H1 (cell line): ENCODE measurements at regions of chr14 and their contacts with region 1.

Region 1: GRCh38 chr14:100383727-100384158 is 60.6 kb downstream of the SLC25A47 start:
- DNase-seq: peak in 1 of 2 experiments; percentile 87
- H3K4me3 ChIP-seq: no peak overlapping the region
- H3K27ac ChIP-seq: no peak overlapping the region
- H3K4me1 ChIP-seq: peaks cover 0 to 9% (median 0%) of the 10 kb centered on the region in 4 experiments; a peak in 3 of 7 replicates
- H3K27me3 ChIP-seq: no peaks in the 10 kb centered on the region
- CTCF ChIP-seq: peak; percentile 93 to 97 (median 97)
- EP300 ChIP-seq: no peak
- POLR2A ChIP-seq: no peak
- RAD21 ChIP-seq: peak; percentile 88 to 89

Region 2: DNA sequence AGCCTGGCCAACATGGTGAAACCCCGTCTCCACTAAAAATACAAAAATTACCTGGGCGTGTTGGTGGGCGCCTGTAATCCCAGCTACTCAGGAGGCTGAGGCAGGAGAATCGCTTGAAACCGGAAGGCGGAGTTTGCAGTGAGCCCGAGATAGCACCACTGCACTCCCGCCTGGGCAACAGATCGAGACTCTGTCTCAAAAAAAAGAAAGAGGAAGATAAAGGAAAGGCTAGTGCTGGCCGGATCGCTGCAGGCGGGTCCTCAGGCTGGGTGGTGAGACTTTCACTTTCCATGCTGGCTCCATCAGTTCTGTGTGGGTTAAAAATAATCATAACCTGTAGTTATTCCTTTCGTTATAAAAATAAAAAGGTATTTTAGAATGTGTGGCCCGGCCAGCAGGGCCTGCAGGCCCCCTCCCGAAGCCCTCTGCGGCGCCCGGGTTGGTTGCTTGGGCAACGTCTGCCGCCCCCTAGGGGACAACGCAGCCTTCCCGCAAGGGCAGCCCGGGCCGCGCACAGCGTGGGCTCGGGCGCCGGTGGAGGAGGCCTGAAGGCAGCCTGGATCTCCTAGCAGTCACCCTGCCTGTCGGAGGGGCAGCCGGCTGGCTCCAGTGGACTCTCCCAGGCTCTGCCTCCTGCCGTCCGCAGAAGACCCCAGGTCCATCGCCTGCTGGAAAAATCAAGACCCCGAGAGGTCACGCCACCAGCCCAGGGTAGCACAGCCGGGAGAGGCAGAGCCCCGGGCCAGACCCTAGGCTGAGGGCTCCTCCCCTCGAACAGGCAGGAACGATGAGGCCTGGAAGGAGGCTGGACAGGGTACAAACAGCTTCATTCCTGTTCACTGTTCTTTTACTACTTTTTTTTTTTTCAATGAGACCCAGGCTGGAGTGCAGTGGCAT is 65.6 kb before region 1 on chr14:
- CTCF ChIA-PET with region 1: interaction called, 14 read pairs
- POLR2A ChIA-PET with region 1: no interaction called
- DNase-seq: peak; percentile 44 to 92
- H3K4me3 ChIP-seq: no peak overlapping the region
- H3K27ac ChIP-seq: no peak overlapping the region
- H3K4me1 ChIP-seq: peaks cover 0 to 2% (median 0%) of the 10 kb centered on the region in 4 experiments; a peak in 3 of 7 replicates
- H3K27me3 ChIP-seq: no peaks in the 10 kb centered on the region; a peak in 2 of 7 replicates
- CTCF ChIP-seq: peak in 2 of 3 experiments; percentile 76 to 82; a peak in 3 of 4 replicates
- EP300 ChIP-seq: no peak
- POLR2A ChIP-seq: no peak
- RAD21 ChIP-seq: peak; percentile 42 to 66; a peak in 3 of 4 replicates

Region 3: DNA sequence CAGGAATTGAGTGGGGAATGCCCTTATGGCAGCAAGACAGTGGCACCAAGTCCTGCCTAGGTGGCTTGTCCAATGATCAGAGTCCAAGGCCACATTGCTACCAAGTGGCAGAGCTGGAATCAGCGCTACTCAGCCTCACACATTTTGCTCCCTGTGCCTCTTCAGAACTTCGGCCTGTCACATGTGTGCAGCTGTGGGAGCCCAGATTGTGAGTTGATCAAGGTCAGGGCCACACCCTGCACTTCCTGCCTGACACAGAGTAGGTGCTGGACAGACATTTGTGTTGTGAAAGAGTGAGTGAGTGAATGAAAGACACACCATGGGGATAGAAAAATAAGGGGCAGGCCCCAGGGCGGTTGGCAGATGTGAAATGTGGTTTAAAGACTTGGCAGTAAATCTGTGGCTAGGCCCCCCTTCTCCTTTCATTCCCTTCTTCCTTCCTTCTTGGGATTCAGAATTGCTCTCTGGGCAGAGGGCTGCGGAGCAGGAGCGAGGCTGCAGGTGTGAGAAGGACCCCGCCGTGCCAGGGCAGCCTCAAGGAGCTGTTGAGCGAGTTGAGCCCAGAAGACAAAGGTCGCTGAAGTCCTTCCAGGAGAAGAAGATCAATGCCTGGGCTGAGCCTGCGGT is 22.9 kb after region 1 on chr14:
- CTCF ChIA-PET with region 1: interaction called, 37 read pairs
- POLR2A ChIA-PET with region 1: no interaction called
- DNase-seq: no peak
- H3K4me3 ChIP-seq: no peak overlapping the region
- H3K27ac ChIP-seq: no peak overlapping the region
- H3K4me1 ChIP-seq: peaks cover 7 to 19% (median 14%) of the 10 kb centered on the region in 4 experiments
- H3K27me3 ChIP-seq: no peaks in the 10 kb centered on the region
- CTCF ChIP-seq: no peak
- EP300 ChIP-seq: no peak
- POLR2A ChIP-seq: no peak
- RAD21 ChIP-seq: no peak

Region 4: GRCh38 chr14:100424504-100425418 is 41.0 kb after region 1 on chr14:
- CTCF ChIA-PET with region 1: interaction called, 119 read pairs
- POLR2A ChIA-PET with region 1: interaction called, 4 read pairs
- DNase-seq: no peak
- H3K4me3 ChIP-seq: no peak overlapping the region
- H3K27ac ChIP-seq: no peak overlapping the region
- H3K4me1 ChIP-seq: peaks cover 0 to 8% (median 2%) of the 10 kb centered on the region in 4 experiments; a peak in 6 of 7 replicates
- H3K27me3 ChIP-seq: no peaks in the 10 kb centered on the region
- CTCF ChIP-seq: no peak
- EP300 ChIP-seq: no peak
- POLR2A ChIP-seq: no peak
- RAD21 ChIP-seq: no peak

Region 5: DNA sequence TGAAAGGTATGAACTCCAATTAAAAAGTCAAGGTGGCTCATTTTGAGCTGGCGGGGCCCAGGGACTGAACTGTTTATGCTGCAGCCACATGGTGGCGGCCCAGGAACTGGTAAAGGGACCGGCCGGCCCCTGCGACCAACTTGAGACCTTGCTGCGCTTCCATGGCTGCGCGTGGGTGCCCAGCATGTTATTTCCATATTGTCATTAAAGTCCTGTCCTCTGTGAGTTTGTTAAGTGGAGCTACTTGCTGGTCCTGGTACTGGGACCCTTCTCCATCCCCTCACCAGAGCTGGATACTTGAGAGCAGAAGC is 141.1 kb after region 1 on chr14:
- CTCF ChIA-PET with region 1: interaction called, 12 read pairs
- POLR2A ChIA-PET with region 1: no interaction called
- DNase-seq: peak in 1 of 2 experiments; percentile 75
- H3K4me3 ChIP-seq: no peak overlapping the region
- H3K27ac ChIP-seq: no peak overlapping the region
- H3K4me1 ChIP-seq: peaks cover 2 to 8% (median 5%) of the 10 kb centered on the region in 4 experiments; a peak in 4 of 7 replicates
- H3K27me3 ChIP-seq: no peaks in the 10 kb centered on the region; a peak in 1 of 7 replicates
- CTCF ChIP-seq: peak; percentile 61 to 88 (median 67)
- EP300 ChIP-seq: no peak
- POLR2A ChIP-seq: no peak
- RAD21 ChIP-seq: peak; percentile 89 to 92

Region 6: GRCh38 chr14:100634026-100634425 is 250.3 kb after region 1 on chr14:
- CTCF ChIA-PET with region 1: interaction called, 14 read pairs
- POLR2A ChIA-PET with region 1: no interaction called
- DNase-seq: no peak
- H3K4me3 ChIP-seq: no peak overlapping the region
- H3K27ac ChIP-seq: no peak overlapping the region
- H3K4me1 ChIP-seq: peaks cover 0 to 10% (median under 1%) of the 10 kb centered on the region in 4 experiments; a peak in 2 of 7 replicates
- H3K27me3 ChIP-seq: no peaks in the 10 kb centered on the region; a peak in 1 of 7 replicates
- CTCF ChIP-seq: no peak
- EP300 ChIP-seq: no peak
- POLR2A ChIP-seq: no peak
- RAD21 ChIP-seq: no peak